ENCODE measurements at regions of chr15 and their contacts with region 1.

Region 1: GRCh38 chr15:84023636-84024035 is 211.9 kb upstream of the GOLGA6L4 start:
- DNase-seq: peak; percentile 69
- H3K4me3 Mint-ChIP-seq: no peak overlapping the region
- H3K27ac Mint-ChIP-seq: no peak overlapping the region
- H3K4me1 Mint-ChIP-seq: no peaks in the 10 kb centered on the region
- H3K27me3 Mint-ChIP-seq: no peaks in the 10 kb centered on the region
- CTCF ChIP-seq: peak; percentile 42

Region 2: GRCh38 chr15:83564975-83565532 is 458.6 kb before region 1 on chr15:
- CTCF ChIA-PET with region 1: interaction called, 12 read pairs
- POLR2A ChIA-PET with region 1: no interaction called
- intact Hi-C with region 1: no loop called
- DNase-seq: no peak
- H3K4me3 Mint-ChIP-seq: no peak overlapping the region
- H3K27ac Mint-ChIP-seq: no peak overlapping the region
- H3K4me1 Mint-ChIP-seq: peaks cover 6% of the 10 kb centered on the region
- H3K27me3 Mint-ChIP-seq: no peaks in the 10 kb centered on the region
- CTCF ChIP-seq: no peak

Region 3: DNA sequence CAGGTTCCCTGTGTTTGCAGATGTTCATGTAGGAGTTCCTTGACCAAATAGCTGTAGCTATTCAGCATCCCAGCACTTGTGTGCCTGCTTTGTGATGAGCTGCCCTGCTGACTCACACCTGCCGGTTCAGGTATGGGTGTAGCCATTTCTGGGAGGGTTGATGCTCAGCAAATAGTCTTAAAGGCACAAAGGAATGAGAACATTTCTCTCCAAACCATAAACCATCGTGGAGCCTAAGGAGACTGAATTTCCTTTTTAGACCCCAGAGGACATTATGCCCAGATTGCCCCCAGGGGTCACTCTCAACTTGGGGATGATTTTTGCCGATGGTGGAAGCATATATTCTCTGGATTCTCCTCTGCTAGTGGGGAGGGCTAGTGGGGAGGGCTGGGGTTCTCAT is 289.1 kb before region 1 on chr15:
- CTCF ChIA-PET with region 1: interaction called, 6 read pairs
- POLR2A ChIA-PET with region 1: no interaction called
- intact Hi-C with region 1: loop called (anchors 1 kb)
- DNase-seq: peak; percentile 55
- H3K4me3 Mint-ChIP-seq: no peak overlapping the region
- H3K27ac Mint-ChIP-seq: peak overlapping the region; percentile 70
- H3K4me1 Mint-ChIP-seq: peaks cover 21% of the 10 kb centered on the region
- H3K27me3 Mint-ChIP-seq: no peaks in the 10 kb centered on the region
- CTCF ChIP-seq: peak; percentile 24

Region 4: GRCh38 chr15:84046064-84046637 is 22.5 kb after region 1 on chr15:
- CTCF ChIA-PET with region 1: no interaction called
- POLR2A ChIA-PET with region 1: no interaction called
- intact Hi-C with region 1: no loop called
- DNase-seq: no peak
- H3K4me3 Mint-ChIP-seq: no peak overlapping the region
- H3K27ac Mint-ChIP-seq: no peak overlapping the region
- H3K4me1 Mint-ChIP-seq: no peaks in the 10 kb centered on the region
- H3K27me3 Mint-ChIP-seq: no peaks in the 10 kb centered on the region
- CTCF ChIP-seq: no peak